ENCODE measurements at regions of chr19 and their contacts with region 1.

Region 1: GRCh38 chr19:14347999-14348889 is 33.0 kb upstream of the ADGRE5 start:
- DNase-seq: peak; percentile 19 to 92
- H3K4me3 ChIP-seq: peak overlapping the region in 1 of 4 experiments; percentile 28; a peak in 1 of 8 replicates
- H3K27ac ChIP-seq: no peak overlapping the region
- H3K4me1 ChIP-seq: peaks cover 0 to 4% (median 0%) of the 10 kb centered on the region in 4 experiments; a peak in 5 of 7 replicates
- H3K27me3 ChIP-seq: no peaks in the 10 kb centered on the region
- CTCF ChIP-seq: peak; percentile 91 to 96 (median 92)
- EP300 ChIP-seq: 0 out of 3 replicates have a peak, but pooled peaks of 1 of the 2 experiments have one; percentile 11
- POLR2A ChIP-seq: no peak
- RAD21 ChIP-seq: peak; percentile 96 to 97

Region 2: GRCh38 chr19:14198384-14199376 is 149.6 kb before region 1 on chr19:
- CTCF ChIA-PET with region 1: interaction called, 171 read pairs
- POLR2A ChIA-PET with region 1: interaction called, 6 read pairs
- DNase-seq: no peak
- H3K4me3 ChIP-seq: no peak overlapping the region
- H3K27ac ChIP-seq: no peak overlapping the region
- H3K4me1 ChIP-seq: peaks cover 0 to 16% (median 10%) of the 10 kb centered on the region in 4 experiments; a peak in 6 of 7 replicates
- H3K27me3 ChIP-seq: no peaks in the 10 kb centered on the region
- CTCF ChIP-seq: peak; percentile 37 to 53 (median 41)
- EP300 ChIP-seq: no peak
- POLR2A ChIP-seq: no peak
- RAD21 ChIP-seq: peak; percentile 40 to 52; a peak in 3 of 4 replicates

Region 3: DNA sequence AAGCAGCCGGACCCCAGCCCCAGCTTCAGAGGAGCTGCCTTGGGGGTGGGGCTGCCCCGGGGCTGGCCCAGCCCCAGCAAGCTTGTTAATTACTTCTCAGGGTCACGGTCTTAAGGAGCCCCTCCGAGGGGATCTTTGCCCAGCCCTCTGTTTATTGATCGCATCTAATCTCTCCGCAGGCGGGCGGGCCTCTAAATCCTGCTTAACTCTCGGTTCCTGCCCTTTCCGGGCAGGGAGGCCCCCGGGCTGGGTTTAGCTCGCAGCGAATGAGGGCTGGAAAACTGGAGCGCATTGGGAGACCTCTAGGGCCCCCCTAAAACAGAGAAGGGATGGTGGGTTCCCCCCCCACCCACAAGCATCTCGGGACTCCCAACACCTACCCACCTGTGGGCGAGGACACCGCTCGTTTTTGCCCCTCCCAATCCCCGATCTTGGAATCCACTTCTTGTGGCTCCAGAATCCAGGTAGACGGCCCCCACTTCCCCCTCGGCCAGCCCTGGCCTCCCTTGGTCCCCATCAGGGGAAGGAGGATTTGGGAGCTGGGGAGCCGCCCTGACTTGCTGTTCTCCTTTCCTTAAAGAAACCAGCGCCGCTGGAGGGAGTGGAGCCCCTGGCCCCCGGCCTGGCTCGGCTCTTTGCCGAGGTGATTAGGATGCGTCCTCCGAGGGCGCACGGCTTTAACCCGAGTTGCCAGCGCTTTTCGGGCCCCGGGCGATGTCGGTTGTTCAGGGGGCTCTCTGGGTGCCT is 82.8 kb before region 1 on chr19:
- CTCF ChIA-PET with region 1: interaction called, 14 read pairs
- POLR2A ChIA-PET with region 1: no interaction called
- DNase-seq: peak in 1 of 2 experiments; percentile 75
- H3K4me3 ChIP-seq: peak overlapping the region; percentile 32 to 62 (median 45)
- H3K27ac ChIP-seq: no peak overlapping the region
- H3K4me1 ChIP-seq: peaks cover 2 to 10% (median 5%) of the 10 kb centered on the region in 4 experiments; a peak in 5 of 7 replicates
- H3K27me3 ChIP-seq: peaks cover 0 to 6% (median 1%) of the 10 kb centered on the region in 4 experiments; a peak in 3 of 7 replicates
- CTCF ChIP-seq: no peak
- EP300 ChIP-seq: no peak
- POLR2A ChIP-seq: no peak
- RAD21 ChIP-seq: no peak

Region 4: GRCh38 chr19:14337510-14337909 is 10.7 kb before region 1 on chr19:
- CTCF ChIA-PET with region 1: interaction called, 25 read pairs
- POLR2A ChIA-PET with region 1: no interaction called
- DNase-seq: peak in 1 of 2 experiments; percentile 86
- H3K4me3 ChIP-seq: no peak overlapping the region
- H3K27ac ChIP-seq: no peak overlapping the region
- H3K4me1 ChIP-seq: peaks cover 0 to 5% (median under 1%) of the 10 kb centered on the region in 4 experiments; a peak in 2 of 7 replicates
- H3K27me3 ChIP-seq: no peaks in the 10 kb centered on the region
- CTCF ChIP-seq: no peak
- EP300 ChIP-seq: no peak
- POLR2A ChIP-seq: no peak
- RAD21 ChIP-seq: no peak

Region 5: GRCh38 chr19:14383661-14384555 is 35.7 kb after region 1 on chr19:
- CTCF ChIA-PET with region 1: interaction called, 17 read pairs
- POLR2A ChIA-PET with region 1: no interaction called
- DNase-seq: no peak
- H3K4me3 ChIP-seq: no peak overlapping the region
- H3K27ac ChIP-seq: no peak overlapping the region
- H3K4me1 ChIP-seq: peaks cover 2 to 19% (median 6%) of the 10 kb centered on the region in 4 experiments
- H3K27me3 ChIP-seq: no peaks in the 10 kb centered on the region
- CTCF ChIP-seq: no peak
- EP300 ChIP-seq: no peak
- POLR2A ChIP-seq: no peak
- RAD21 ChIP-seq: no peak

Region 6: GRCh38 chr19:14614099-14614412 is 265.8 kb after region 1 on chr19:
- CTCF ChIA-PET with region 1: no interaction called
- POLR2A ChIA-PET with region 1: no interaction called
- DNase-seq: no peak
- H3K4me3 ChIP-seq: no peak overlapping the region
- H3K27ac ChIP-seq: no peak overlapping the region
- H3K4me1 ChIP-seq: no peaks in the 10 kb centered on the region
- H3K27me3 ChIP-seq: no peaks in the 10 kb centered on the region
- CTCF ChIP-seq: no peak
- EP300 ChIP-seq: no peak
- POLR2A ChIP-seq: no peak
- RAD21 ChIP-seq: no peak